Activated T-helper 2 cell treated with anti-CD3 and anti-CD28 coated beads, Interferon-gamma antibody, Interleukin-2, Interleukin-4, amounts not matched to agents 10 μg/mL and 5 μg/mL and 100 μg/mL, durations not matched to agents 14 hours and 24 hours and 36 hours (primary cell): ENCODE measurements at regions of chr9 and their contacts with region 1.

Region 1: DNA sequence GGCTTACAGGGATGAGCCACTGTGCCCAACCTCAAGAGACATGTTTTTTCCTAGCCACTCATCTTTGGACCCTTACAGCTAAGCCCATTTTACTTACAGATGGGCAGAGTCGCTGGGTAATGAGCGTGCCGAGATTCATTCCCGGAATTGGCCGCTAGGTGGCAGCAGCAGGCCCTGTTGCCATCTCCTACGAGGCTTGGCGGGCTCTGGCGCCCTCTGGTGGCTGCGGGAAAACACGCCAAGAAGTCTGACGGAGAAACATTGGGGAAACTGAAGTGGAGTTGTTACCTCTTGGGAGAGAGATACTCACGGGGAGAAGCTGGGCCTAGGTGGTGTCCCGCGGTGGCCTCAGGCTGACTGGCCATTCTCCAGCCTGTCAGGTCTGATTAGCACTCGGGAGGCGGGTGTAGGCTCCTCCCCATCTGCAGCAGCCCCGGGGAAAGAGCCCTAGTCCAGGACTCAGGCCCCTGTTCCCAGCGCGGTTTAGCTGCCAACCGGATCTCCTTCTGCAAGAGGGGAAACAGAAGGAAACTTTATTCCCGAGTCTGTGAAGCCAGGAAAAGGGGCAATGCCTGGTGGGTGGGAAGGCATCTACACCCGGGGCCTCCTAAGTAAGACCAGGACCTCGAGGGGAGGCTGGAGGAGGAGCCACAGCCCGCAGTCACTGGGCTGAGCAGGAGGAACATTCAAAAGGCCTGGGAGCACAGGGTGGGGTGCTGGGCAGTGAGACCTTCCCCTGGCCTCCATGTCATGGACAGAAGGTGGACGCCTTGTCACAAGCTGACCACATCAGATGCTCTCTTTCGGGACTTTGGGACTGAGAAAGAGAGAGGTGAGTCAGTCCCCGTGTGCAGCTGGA is 9.7 kb downstream of the PTGES2 start:
- DNase-seq: peak; percentile 88
- H3K4me3 Mint-ChIP-seq: no peak overlapping the region
- H3K27ac Mint-ChIP-seq: peak overlapping the region; percentile 30
- H3K4me1 Mint-ChIP-seq: peaks cover 2% of the 10 kb centered on the region
- H3K27me3 Mint-ChIP-seq: no peaks in the 10 kb centered on the region

Region 2: GRCh38 chr9:127943731-127944144 is 174.1 kb before region 1 on chr9:
- intact Hi-C with region 1: loop called (anchors 2 kb)
- DNase-seq: peak; percentile 65
- H3K4me3 Mint-ChIP-seq: no peak overlapping the region
- H3K27ac Mint-ChIP-seq: peak overlapping the region; percentile 51
- H3K4me1 Mint-ChIP-seq: peaks cover 15% of the 10 kb centered on the region
- H3K27me3 Mint-ChIP-seq: no peaks in the 10 kb centered on the region

Region 3: DNA sequence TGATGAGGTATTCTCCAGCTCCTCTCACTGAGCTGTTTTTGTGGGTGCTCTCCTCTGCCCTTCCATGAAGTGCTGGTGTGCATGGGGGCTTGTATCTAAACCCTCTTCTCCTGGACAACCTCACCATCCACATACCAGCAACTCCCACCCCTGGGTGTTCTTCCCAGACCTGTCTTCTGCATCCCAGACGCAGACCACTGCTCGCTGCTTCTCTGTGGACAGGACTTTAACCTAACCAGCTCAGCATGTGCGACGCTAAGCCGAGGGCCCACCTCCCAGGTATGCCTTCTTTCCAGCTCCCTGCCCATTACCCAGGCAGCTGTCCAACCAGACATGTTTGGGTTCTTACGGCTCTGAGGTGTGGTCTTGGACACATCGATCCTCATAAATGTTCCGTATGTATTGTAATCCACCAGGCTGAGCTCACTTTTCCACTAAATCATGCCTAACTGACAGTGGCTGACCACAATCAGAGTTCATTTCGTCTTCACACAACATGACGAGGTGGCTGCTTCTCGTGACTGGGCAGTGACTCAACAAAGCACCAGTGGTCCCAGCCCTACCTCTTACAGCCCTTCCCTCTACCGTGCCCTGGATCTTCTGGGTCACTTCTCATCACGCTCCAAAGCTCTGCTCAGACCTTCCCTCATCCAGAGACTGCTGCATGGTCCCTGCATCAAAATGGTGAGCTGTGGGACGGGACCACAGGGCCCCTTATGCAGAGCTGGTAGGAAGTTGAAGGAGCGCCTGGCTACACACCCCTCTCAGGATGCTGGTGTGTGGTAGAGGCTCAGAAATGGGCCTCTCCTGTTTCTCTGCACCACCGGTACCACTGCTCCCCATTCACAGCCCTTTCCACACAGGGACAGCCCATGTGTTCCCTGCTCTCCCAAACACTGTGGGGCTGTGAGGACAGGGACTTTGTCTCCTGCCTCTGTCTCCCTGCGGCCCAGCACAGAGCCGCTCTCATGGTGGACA is 19.3 kb after region 1 on chr9:
- intact Hi-C with region 1: no loop called
- DNase-seq: no peak
- H3K4me3 Mint-ChIP-seq: no peak overlapping the region
- H3K27ac Mint-ChIP-seq: no peak overlapping the region
- H3K4me1 Mint-ChIP-seq: peaks cover 9% of the 10 kb centered on the region
- H3K27me3 Mint-ChIP-seq: peaks cover 34% of the 10 kb centered on the region

Region 4: DNA sequence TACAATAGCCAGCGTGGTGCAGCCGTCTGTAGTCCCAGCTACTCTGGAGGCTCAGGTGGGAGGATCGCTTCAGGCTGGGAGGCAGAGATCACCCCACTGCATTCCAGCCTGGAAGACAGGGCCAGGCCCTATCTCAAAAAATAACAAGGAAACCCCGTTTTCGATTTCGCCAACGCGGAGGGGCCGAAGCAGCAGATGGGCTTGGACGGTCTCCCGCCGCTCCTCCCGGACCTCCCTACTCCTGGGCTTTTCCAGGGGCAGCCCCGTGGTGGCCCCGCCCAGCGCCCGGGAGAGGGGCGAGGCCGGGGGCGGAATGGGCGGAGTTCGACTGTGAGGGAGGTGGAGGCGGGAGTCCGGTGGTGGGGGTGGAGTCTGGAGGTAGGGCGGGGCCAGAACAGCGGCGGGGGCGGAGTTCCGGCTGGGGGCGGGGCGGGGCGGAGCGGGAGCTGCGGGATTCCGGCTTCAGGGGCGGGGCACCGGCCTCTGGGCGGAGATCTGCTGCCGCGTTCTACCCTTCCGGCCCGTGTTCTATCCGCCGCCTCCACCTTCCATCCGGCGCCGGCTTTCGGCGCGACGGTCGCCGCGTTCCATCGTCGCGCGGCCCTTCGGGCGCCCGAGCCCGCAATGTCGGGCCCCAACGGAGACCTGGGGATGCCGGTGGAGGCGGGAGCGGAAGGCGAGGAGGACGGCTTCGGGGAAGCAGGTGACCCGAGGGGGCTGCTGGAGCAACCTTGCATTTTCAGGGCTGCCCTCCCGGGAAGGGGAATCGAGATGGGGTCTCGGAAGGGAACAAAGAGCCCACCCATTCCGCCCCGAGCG is 42.2 kb after region 1 on chr9 and contains the start of gene BBLN:
- intact Hi-C with region 1: no loop called
- DNase-seq: peak; percentile 90
- H3K4me3 Mint-ChIP-seq: peak within 1 kb of the TSS; percentile 81
- H3K27ac Mint-ChIP-seq: peak within 1 kb of the TSS; percentile 83
- H3K4me1 Mint-ChIP-seq: peaks cover 17% of the 10 kb centered on the region
- H3K27me3 Mint-ChIP-seq: no peaks in the 10 kb centered on the region
- total RNA-seq, gene BBLN: 93.8 and 103 TPM in 2 replicates